A673 (cell line): ENCODE measurements at regions of chr16 and their contacts with region 1.

Region 1: DNA sequence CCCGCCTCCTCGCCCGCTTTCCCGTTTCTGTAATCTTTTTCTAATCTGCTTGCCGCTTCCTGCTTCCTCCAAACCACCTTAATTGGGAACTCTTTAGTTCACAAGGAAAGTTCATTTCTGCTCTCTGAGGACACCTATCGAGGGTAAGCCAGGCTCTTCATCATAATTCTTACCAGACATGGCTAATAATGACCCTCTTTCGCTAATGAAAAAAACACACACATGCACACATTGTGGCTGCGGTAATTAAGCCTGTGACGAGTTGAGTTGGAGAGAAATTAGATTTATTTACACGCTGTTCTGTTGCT is 100.6 kb downstream of the ZNF423 start:
- DNase-seq: peak; percentile 86
- H3K4me3 ChIP-seq: peak overlapping the region; percentile 31
- H3K27ac ChIP-seq: peak overlapping the region; percentile 78
- H3K4me1 ChIP-seq: peaks cover 18% of the 10 kb centered on the region
- H3K27me3 ChIP-seq: no peaks in the 10 kb centered on the region
- CTCF ChIP-seq: peak; percentile 68

Region 2: DNA sequence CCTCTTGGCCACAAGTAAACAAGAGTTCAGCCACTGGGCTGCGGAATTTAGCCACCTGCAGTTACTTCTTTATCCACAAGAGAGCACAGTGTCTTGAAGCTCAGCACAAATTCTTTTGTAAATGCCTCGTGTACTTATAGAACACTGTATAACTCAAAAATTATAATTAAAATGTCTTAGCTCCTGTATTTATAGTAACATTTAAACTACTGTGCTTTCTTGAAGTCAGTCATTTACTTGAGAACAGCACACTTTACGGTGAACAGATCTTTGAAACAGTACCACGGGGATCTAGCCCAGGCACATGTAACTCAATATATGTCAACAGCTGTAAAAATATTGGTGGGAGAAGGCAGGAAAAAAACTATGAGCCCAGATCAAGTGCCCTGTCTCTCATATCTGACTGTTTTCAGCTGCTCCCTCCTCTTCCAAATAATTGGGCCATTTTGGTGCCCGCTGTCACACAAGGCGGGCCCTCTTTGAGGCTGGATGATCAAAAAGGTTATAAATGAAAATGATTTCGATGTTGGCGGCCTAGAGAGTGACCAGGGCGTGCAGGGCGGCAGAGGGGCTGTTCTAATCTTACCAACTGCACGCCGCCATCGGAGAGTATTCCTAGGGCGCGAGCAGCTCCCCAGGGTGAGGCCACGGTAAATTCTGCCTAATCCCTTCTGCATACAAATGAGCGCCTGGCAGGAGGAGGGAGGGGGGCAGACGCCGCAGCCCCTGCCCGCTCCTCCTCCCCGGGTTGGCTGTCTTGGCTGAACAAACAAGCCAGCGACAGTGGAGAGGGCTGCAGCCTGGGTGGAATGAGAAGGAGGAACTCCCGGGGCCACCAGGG is 198.4 kb before region 1 on chr16:
- CTCF ChIA-PET with region 1: interaction called, 6 read pairs
- POLR2A ChIA-PET with region 1: no interaction called
- intact Hi-C with region 1: loop called (anchors 5 kb)
- DNase-seq: peak; percentile 82
- H3K4me3 ChIP-seq: peak overlapping the region; percentile 27
- H3K27ac ChIP-seq: peak overlapping the region; percentile 74
- H3K4me1 ChIP-seq: peaks cover 45% of the 10 kb centered on the region
- H3K27me3 ChIP-seq: no peaks in the 10 kb centered on the region
- CTCF ChIP-seq: peak; percentile 80

Region 3: DNA sequence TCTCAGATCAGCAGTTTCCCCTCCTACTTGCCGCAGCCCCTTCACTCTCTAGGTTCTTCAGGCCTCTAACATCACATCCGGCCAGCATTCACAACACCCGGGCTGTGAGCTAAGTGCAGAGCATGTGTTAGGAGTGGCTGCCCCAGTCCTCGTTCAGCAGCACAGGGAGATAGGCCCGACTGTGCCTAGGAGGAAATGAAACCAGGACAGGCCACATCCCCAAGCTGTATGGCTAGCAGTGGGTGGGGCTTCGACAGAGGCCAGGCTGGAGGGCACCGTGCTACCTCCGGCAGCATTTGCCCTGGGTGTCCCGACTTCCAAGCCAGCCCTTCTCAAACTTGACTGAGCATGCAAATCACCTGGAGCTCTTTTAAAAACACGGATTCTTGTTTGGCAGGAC is 179.9 kb before region 1 on chr16:
- CTCF ChIA-PET with region 1: no interaction called
- POLR2A ChIA-PET with region 1: no interaction called
- intact Hi-C with region 1: no loop called
- DNase-seq: no peak
- H3K4me3 ChIP-seq: no peak overlapping the region
- H3K27ac ChIP-seq: no peak overlapping the region
- H3K4me1 ChIP-seq: no peaks in the 10 kb centered on the region
- H3K27me3 ChIP-seq: no peaks in the 10 kb centered on the region
- CTCF ChIP-seq: no peak

Region 4: DNA sequence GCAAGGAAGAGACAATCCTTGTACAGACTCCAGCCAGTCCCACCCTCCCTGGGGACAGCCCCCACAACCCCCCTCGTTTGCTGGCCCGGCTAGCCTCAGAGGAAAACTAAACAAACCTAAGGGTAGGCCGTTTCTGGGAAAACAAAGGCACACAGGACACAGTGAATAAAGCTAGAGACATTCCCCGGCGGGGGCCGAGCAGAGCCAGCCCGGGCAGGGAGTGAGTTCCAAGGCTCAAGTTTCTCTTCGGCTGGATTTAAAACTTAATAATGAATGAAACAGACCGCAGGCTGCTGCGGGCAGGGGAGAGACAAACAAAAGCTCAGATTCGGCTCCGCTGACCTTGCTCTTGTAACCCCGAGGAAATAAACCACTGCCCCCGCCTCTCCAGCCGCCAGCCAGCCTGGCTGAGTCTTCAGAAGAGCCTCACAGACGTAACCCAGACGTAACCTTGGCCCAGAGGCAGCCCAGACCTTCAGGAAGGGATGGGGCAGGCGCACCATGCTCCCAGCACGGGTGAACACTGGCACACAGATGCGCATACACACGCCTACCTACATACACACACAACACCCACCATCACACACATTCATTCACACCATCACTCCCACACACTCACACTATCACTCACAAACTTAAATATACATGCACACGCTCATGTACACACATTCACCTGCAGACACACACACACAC is 115.4 kb before region 1 on chr16:
- CTCF ChIA-PET with region 1: no interaction called
- POLR2A ChIA-PET with region 1: no interaction called
- intact Hi-C with region 1: loop called (anchors 10 kb)
- DNase-seq: no peak
- H3K4me3 ChIP-seq: no peak overlapping the region
- H3K27ac ChIP-seq: no peak overlapping the region
- H3K4me1 ChIP-seq: peaks cover 8% of the 10 kb centered on the region
- H3K27me3 ChIP-seq: no peaks in the 10 kb centered on the region
- CTCF ChIP-seq: no peak

Region 5: DNA sequence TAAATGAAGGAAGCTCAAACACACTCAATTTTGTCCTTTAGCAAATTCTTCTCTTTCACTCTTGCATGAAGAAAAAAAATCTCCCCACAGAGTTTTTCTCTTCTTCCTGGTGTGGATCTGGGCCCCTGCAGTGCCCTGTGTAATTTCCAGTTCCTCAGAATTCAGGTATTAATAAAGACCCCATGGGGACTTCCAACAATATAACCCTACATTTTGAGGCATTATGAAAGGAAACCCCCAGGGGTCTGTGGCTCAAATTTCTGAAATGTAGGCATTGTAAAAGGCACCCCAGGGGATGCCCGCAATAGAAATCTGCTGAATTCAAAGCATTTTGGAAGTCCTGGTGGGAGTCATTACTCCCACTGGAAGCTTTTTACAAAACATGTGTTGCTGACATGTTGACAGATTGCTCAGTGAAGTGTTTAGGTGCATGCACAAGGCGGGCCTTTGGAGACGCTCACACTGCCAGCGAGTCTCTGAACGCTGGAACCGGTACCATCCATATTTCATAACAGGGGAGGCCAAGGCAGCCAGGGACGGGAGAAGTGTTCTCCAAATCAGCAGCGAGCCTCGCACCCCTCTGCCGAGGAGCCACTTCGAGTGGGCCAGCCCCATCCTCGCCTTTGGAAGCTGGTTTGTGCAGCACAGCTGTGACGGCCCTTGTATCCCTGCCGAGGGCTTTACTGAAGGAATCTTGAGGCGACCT is 53.3 kb before region 1 on chr16:
- CTCF ChIA-PET with region 1: no interaction called
- POLR2A ChIA-PET with region 1: no interaction called
- intact Hi-C with region 1: loop called (anchors 1 kb)
- DNase-seq: peak; percentile 99
- H3K4me3 ChIP-seq: peak overlapping the region; percentile 43
- H3K27ac ChIP-seq: peak overlapping the region; percentile 99
- H3K4me1 ChIP-seq: peaks cover 65% of the 10 kb centered on the region
- H3K27me3 ChIP-seq: no peaks in the 10 kb centered on the region
- CTCF ChIP-seq: no peak